ENCODE measurements at regions of chr20 and their contacts with region 1.

Region 1: GRCh38 chr20:64069614-64070243 is 6.7 kb downstream of the TCEA2 start:
- DNase-seq: peak in 1 of 2 experiments; percentile 87
- ATAC-seq: peak; percentile 60 to 79
- H3K4me3 ChIP-seq: no peak overlapping the region
- H3K27ac ChIP-seq: no peak overlapping the region
- H3K4me1 ChIP-seq: peaks cover 25% of the 10 kb centered on the region
- CTCF ChIP-seq: peak; percentile 68
- EP300 ChIP-seq: no peak
- POLR2A ChIP-seq: no peak
- RAD21 ChIP-seq: peak; percentile 31 to 40; a peak in 2 of 5 replicates

Region 2: DNA sequence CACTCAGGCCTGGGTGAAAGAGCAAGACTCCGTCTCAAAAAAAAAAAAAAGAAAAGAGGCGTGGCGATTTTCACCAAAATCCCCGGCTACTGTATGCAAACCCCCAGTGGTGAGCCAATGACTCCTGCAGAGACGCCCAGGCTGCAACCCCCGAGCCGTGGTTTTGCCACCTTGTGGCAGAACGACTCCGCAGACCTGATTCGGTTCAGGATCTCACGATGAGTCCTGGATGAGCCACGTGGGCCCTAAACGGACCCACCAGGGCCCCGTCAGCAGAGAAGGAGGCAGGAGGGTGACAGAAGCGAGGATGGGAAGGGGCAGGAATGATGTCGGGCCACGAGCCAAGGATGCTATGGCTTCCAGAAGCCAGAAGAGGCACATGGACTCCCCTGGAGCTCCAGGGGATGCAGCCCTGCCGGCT is 287.7 kb before region 1 on chr20:
- CTCF ChIA-PET with region 1: no interaction called
- POLR2A ChIA-PET with region 1: no interaction called
- DNase-seq: no peak
- ATAC-seq: no peak; a peak in 1 of 6 replicates
- H3K4me3 ChIP-seq: no peak overlapping the region
- H3K27ac ChIP-seq: no peak overlapping the region
- H3K4me1 ChIP-seq: peaks cover 11% of the 10 kb centered on the region
- CTCF ChIP-seq: no peak
- EP300 ChIP-seq: no peak
- POLR2A ChIP-seq: no peak
- RAD21 ChIP-seq: no peak

Region 3: GRCh38 chr20:63934271-63935068 is 135.3 kb before region 1 on chr20:
- CTCF ChIA-PET with region 1: no interaction called
- POLR2A ChIA-PET with region 1: no interaction called
- DNase-seq: no peak
- ATAC-seq: peak in 1 of 2 experiments; percentile 62; a peak in 3 of 6 replicates
- H3K4me3 ChIP-seq: no peak overlapping the region
- H3K27ac ChIP-seq: no peak overlapping the region
- H3K4me1 ChIP-seq: no peaks in the 10 kb centered on the region
- CTCF ChIP-seq: peak; percentile 3; the same call in 2 of the 3 replicates
- EP300 ChIP-seq: no peak
- POLR2A ChIP-seq: no peak
- RAD21 ChIP-seq: no peak

Region 4: GRCh38 chr20:63947638-63948456 is 121.9 kb before region 1 on chr20:
- CTCF ChIA-PET with region 1: no interaction called
- POLR2A ChIA-PET with region 1: no interaction called
- DNase-seq: no peak
- ATAC-seq: no peak
- H3K4me3 ChIP-seq: no peak overlapping the region
- H3K27ac ChIP-seq: no peak overlapping the region
- H3K4me1 ChIP-seq: peaks cover 30% of the 10 kb centered on the region
- CTCF ChIP-seq: no peak
- EP300 ChIP-seq: no peak
- POLR2A ChIP-seq: no peak
- RAD21 ChIP-seq: no peak

Region 5: DNA sequence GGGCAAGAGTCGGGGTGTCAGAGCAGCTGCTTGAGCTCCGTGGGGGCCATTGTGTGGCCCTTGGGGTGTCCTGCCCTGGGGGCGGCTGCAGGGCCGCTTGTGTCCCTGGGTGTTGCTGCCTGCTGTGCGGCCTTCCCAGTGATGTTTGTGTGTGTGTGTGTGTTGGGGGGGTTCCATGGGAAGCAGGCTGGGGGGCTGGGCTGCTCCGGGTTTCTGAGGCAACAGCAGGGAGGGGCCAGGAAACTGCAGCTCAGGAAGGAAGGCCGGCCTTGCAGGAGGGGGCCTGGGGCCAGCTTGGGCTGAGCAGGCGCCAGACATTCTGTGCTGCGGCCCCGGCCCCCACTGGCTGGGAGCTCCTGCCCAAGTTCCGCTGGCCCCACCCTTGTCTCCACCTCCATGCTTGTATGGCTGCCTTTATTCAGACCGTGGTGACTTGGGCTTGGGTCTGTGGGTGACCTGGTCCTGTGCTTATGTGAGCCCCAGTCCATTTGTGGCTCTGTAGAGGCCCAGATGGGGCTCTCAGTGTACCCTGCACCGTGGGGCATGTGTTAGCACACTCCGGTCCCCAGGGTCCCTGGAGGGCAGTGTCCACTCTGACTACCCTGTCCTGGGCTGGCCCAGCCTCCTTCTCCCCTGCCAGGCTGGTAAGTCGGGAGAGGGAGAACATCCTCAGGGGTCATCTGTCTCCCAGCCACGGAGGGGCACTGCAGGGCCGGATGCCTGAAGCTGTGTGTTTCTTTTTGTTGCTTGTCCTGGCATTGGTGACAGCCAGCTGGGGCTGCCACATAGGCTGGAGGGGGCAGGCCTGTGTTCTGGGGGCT is 15.7 kb before region 1 on chr20:
- CTCF ChIA-PET with region 1: interaction called, 24 read pairs
- POLR2A ChIA-PET with region 1: interaction called, 3 read pairs
- DNase-seq: peak; percentile 52 to 68
- ATAC-seq: peak; percentile 30 to 57; a peak in 5 of 6 replicates
- H3K4me3 ChIP-seq: no peak overlapping the region
- H3K27ac ChIP-seq: peak overlapping the region in 1 of 2 experiments; percentile 55; a peak in 3 of 6 replicates
- H3K4me1 ChIP-seq: peaks cover 55% of the 10 kb centered on the region
- CTCF ChIP-seq: peak; percentile 19; the same call in 2 of the 3 replicates
- EP300 ChIP-seq: no peak
- POLR2A ChIP-seq: no peak
- RAD21 ChIP-seq: peak in 1 of 2 experiments; percentile 51; a peak in 2 of 5 replicates

Measured in A549 (cell line).